ENCODE measurements at regions of chr2 and their contacts with region 1.

Region 1: GRCh38 chr2:176140513-176141317 is 10.6 kb upstream of the HOXD4 start:
- DNase-seq: peak; percentile 66 to 92
- H3K4me3 ChIP-seq: peak overlapping the region; percentile 35 to 67 (median 59)
- H3K27ac ChIP-seq: no peak overlapping the region
- H3K4me1 ChIP-seq: peaks cover 0 to 9% (median 4%) of the 10 kb centered on the region in 4 experiments; a peak in 5 of 7 replicates
- H3K27me3 ChIP-seq: peaks cover 81 to 100% (median 96%) of the 10 kb centered on the region in 4 experiments
- CTCF ChIP-seq: peak; percentile 84 to 96 (median 93)
- EP300 ChIP-seq: no peak
- POLR2A ChIP-seq: no peak
- RAD21 ChIP-seq: peak; percentile 96

Region 2: GRCh38 chr2:176126929-176127773 is 13.6 kb before region 1 on chr2:
- CTCF ChIA-PET with region 1: interaction called, 41 read pairs
- POLR2A ChIA-PET with region 1: interaction called, 3 read pairs
- DNase-seq: peak in 1 of 2 experiments; percentile 83
- H3K4me3 ChIP-seq: no peak overlapping the region
- H3K27ac ChIP-seq: no peak overlapping the region
- H3K4me1 ChIP-seq: peaks cover 0 to 14% (median 9%) of the 10 kb centered on the region in 4 experiments; a peak in 6 of 7 replicates
- H3K27me3 ChIP-seq: peaks cover 94 to 100% (median 98%) of the 10 kb centered on the region in 4 experiments
- CTCF ChIP-seq: peak; percentile 31 to 74 (median 68)
- EP300 ChIP-seq: no peak
- POLR2A ChIP-seq: no peak
- RAD21 ChIP-seq: peak; percentile 85 to 86

Region 3: GRCh38 chr2:176167398-176167797 is 26.7 kb after region 1 on chr2:
- CTCF ChIA-PET with region 1: interaction called, 25 read pairs
- POLR2A ChIA-PET with region 1: interaction called, 4 read pairs
- DNase-seq: no peak
- H3K4me3 ChIP-seq: no peak overlapping the region
- H3K27ac ChIP-seq: no peak overlapping the region
- H3K4me1 ChIP-seq: peaks cover 0 to 15% (median 9%) of the 10 kb centered on the region in 4 experiments; a peak in 5 of 7 replicates
- H3K27me3 ChIP-seq: peaks cover 96 to 100% (median 100%) of the 10 kb centered on the region in 4 experiments
- CTCF ChIP-seq: no peak
- EP300 ChIP-seq: no peak
- POLR2A ChIP-seq: no peak
- RAD21 ChIP-seq: no peak

Region 4: DNA sequence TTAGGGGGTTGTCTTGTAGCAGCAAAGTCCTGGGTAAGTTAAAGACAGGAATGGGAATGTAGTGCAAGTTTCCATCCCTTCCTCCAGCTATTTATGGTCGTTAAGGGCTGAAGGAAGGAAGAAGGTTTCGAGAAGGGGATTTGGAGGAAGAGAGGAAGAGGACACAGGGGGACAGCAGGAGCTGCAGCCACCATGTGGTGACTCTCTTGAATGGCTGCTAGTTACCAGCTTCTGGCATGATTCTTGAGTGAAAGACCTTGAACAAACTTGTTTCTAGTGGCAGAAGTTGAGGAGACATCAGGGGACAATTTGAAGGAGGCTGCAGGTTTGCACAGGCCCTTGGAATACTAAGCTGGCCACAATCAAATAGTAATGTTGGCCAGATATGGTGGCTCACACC is 245.1 kb after region 1 on chr2:
- CTCF ChIA-PET with region 1: interaction called, 11 read pairs
- POLR2A ChIA-PET with region 1: no interaction called
- DNase-seq: no peak
- H3K4me3 ChIP-seq: no peak overlapping the region
- H3K27ac ChIP-seq: no peak overlapping the region
- H3K4me1 ChIP-seq: no peaks in the 10 kb centered on the region
- H3K27me3 ChIP-seq: no peaks in the 10 kb centered on the region
- CTCF ChIP-seq: peak; percentile 17 to 38 (median 28); a peak in 3 of 4 replicates
- EP300 ChIP-seq: no peak
- POLR2A ChIP-seq: no peak
- RAD21 ChIP-seq: peak; percentile 48 to 58

Region 5: DNA sequence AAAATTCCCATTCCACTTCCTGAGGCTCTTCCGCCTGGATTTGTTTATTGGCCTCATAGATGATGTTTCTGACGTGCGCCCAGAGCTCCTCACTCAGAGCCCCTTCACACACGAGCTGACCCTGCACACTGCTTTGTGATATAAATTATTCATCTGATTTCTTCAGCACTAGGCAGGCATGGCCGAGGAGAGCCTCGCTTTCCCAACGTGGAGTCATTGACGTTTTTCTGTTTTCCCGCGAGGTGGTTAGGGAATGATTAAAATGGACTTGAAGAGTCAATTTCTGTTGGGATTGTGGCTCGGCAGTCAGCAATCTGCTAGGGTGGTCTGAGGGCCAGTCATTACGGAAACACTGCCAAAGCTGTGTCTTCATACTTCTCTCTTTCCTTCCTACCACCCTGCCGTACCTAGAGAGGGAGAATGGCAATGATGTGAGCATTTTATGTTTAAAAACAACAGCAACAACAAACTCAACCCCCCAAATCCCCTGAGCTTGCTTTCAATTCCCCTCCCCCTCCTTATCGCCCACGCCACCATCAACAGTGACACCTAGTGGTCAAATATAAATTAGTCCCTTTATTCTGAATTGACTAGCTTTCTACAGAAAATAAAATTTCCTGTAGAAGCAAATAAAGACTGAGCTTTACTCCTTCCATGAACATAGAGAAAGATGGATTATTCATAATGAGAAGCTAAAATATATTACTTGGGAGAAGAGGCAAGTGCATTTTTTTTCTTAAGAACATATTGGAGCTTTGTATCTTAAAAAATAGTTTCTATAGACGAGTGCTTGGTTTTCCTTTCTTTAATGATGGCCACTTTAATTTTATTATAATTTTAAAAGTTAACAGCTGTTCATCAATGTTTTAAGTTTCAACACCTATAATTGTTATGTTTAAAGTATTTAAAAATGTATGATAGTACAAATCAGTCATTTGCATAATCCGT is 413.7 kb after region 1 on chr2:
- CTCF ChIA-PET with region 1: interaction called, 19 read pairs
- POLR2A ChIA-PET with region 1: no interaction called
- DNase-seq: peak in 1 of 2 experiments; percentile 55
- H3K4me3 ChIP-seq: peak overlapping the region in 3 of 4 experiments; percentile 20 to 51 (median 43); a peak in 5 of 8 replicates
- H3K27ac ChIP-seq: no peak overlapping the region
- H3K4me1 ChIP-seq: no peaks in the 10 kb centered on the region; a peak in 2 of 7 replicates
- H3K27me3 ChIP-seq: peaks cover 0 to 11% (median 8%) of the 10 kb centered on the region in 4 experiments; a peak in 6 of 7 replicates
- CTCF ChIP-seq: peak; percentile 13 to 64 (median 62)
- EP300 ChIP-seq: no peak
- POLR2A ChIP-seq: no peak
- RAD21 ChIP-seq: peak; percentile 75 to 84

Region 6: GRCh38 chr2:176653479-176654443 is 513.0 kb after region 1 on chr2:
- CTCF ChIA-PET with region 1: interaction called, 39 read pairs
- POLR2A ChIA-PET with region 1: no interaction called
- DNase-seq: peak in 1 of 2 experiments; percentile 49
- H3K4me3 ChIP-seq: no peak overlapping the region
- H3K27ac ChIP-seq: no peak overlapping the region
- H3K4me1 ChIP-seq: no peaks in the 10 kb centered on the region; a peak in 1 of 7 replicates
- H3K27me3 ChIP-seq: no peaks in the 10 kb centered on the region; a peak in 1 of 7 replicates
- CTCF ChIP-seq: peak; percentile 81 to 89 (median 81)
- EP300 ChIP-seq: no peak
- POLR2A ChIP-seq: no peak
- RAD21 ChIP-seq: peak; percentile 55 to 71